ENCODE measurements at regions of chr9 and their contacts with region 1.

Region 1: GRCh38 chr9:29981013-29981412 is 2403.4 kb upstream of the ACO1 start:
- DNase-seq: no peak
- ATAC-seq: no peak
- H3K4me3 ChIP-seq: no peak overlapping the region
- H3K27ac ChIP-seq: no peak overlapping the region
- H3K4me1 ChIP-seq: no peaks in the 10 kb centered on the region
- H3K27me3 ChIP-seq: no peaks in the 10 kb centered on the region
- CTCF ChIP-seq: no peak

Region 2: GRCh38 chr9:29717631-29718030 is 263.4 kb before region 1 on chr9:
- intact Hi-C with region 1: no loop called
- DNase-seq: no peak
- ATAC-seq: no peak
- H3K4me3 ChIP-seq: no peak overlapping the region
- H3K27ac ChIP-seq: no peak overlapping the region
- H3K4me1 ChIP-seq: no peaks in the 10 kb centered on the region
- H3K27me3 ChIP-seq: no peaks in the 10 kb centered on the region
- CTCF ChIP-seq: no peak

Region 3: GRCh38 chr9:29740518-29740917 is 240.5 kb before region 1 on chr9:
- intact Hi-C with region 1: no loop called
- DNase-seq: no peak
- ATAC-seq: no peak
- H3K4me3 ChIP-seq: no peak overlapping the region
- H3K27ac ChIP-seq: no peak overlapping the region
- H3K4me1 ChIP-seq: no peaks in the 10 kb centered on the region
- H3K27me3 ChIP-seq: no peaks in the 10 kb centered on the region
- CTCF ChIP-seq: no peak

Region 4: GRCh38 chr9:30039712-30040111 is 58.7 kb after region 1 on chr9:
- intact Hi-C with region 1: loop called in 1 of 10 experiments (anchors 10 kb)
- DNase-seq: no peak
- ATAC-seq: no peak
- H3K4me3 ChIP-seq: no peak overlapping the region
- H3K27ac ChIP-seq: no peak overlapping the region
- H3K4me1 ChIP-seq: no peaks in the 10 kb centered on the region
- H3K27me3 ChIP-seq: no peaks in the 10 kb centered on the region
- CTCF ChIP-seq: no peak

Region 5: DNA sequence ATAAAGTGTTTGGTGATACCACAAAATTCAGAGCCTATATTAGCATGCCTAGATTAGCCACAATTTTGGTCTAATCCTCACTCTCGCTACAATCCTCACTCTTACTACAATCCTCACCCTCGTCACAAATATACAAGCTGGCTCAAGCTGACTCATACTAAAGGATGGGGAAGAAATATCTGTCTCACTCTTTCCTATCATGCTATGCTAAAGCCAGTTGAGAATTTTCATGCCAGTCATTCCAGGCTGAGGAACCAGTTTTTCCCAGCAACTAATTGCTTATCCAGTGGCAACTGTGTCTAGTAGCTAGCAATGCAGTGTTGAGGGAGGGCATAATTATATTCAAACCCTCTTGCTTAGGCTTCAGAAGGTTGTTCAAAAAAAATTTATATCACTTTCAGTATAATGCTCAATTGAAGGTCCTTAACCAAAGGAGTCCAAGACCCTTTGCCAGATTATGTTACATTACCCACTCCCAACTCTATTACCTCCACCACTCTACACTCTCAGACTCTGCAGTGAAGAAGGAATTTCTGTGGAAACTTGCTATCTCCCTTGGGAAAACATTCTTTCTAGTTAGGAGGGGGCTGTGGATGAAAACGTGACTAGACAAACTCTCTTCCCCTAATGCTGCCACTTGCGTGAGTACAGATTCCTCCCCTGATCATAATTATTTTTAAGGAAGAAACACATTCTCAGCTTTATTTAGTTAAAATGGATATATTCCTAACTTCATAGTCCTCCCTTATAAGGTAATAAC is 1593.2 kb after region 1 on chr9:
- intact Hi-C with region 1: loop called in 1 of 10 experiments (anchors 5 kb)
- DNase-seq: no peak
- ATAC-seq: no peak
- H3K4me3 ChIP-seq: no peak overlapping the region
- H3K27ac ChIP-seq: no peak overlapping the region
- H3K4me1 ChIP-seq: no peaks in the 10 kb centered on the region
- H3K27me3 ChIP-seq: no peaks in the 10 kb centered on the region
- CTCF ChIP-seq: no peak